WTC11 (cell line): ENCODE measurements at regions of chrX and their contacts with region 1.

Region 1: DNA sequence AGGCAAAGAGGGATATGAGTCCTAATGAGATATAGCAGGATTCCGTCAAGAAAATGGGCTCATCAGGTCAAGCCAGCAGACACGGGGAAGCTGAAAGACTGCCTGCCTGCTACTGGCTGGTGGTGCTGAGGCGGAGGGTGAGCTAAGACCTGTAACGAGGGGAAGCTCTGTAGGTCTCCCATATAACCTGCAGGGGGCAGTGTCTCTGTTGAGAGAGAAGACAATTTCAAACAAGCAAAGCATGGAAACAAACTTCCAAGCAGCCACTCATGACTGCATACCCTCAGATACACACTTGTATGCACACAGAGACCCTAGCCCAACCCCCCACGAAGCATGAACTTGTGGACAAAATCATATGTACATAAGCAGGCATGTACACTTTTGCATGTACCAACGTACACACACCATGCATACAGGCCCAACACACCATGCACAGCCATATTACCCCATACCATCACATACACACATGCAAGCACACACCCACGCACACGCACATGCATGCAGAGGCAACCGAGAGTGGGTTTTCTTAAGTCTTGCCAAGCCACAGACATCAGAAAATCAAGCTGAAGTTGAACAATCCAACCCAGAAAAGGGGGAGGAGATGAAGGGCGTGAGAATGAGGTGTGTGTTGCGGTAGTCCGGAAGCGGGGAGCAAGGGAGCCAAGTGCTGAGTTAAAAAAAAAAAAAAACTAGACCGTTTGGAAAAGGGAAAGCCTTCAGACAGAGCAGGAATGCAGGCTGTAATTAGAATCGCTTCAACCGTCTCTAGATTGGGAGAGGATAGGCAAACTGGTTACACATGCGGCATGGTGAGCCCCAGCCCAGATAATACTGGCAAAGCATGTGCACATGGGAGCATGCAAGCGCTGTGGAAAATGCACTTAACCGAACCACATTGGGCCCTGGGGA is 71.0 kb downstream of the PJA1 start:
- DNase-seq: peak; percentile 55
- ATAC-seq: peak; percentile 92
- H3K4me3 Mint-ChIP-seq: no peak overlapping the region
- H3K27ac Mint-ChIP-seq: no peak overlapping the region
- H3K4me1 Mint-ChIP-seq: no peaks in the 10 kb centered on the region
- H3K27me3 Mint-ChIP-seq: no peaks in the 10 kb centered on the region
- CTCF ChIP-seq: peak; percentile 65

Region 2: DNA sequence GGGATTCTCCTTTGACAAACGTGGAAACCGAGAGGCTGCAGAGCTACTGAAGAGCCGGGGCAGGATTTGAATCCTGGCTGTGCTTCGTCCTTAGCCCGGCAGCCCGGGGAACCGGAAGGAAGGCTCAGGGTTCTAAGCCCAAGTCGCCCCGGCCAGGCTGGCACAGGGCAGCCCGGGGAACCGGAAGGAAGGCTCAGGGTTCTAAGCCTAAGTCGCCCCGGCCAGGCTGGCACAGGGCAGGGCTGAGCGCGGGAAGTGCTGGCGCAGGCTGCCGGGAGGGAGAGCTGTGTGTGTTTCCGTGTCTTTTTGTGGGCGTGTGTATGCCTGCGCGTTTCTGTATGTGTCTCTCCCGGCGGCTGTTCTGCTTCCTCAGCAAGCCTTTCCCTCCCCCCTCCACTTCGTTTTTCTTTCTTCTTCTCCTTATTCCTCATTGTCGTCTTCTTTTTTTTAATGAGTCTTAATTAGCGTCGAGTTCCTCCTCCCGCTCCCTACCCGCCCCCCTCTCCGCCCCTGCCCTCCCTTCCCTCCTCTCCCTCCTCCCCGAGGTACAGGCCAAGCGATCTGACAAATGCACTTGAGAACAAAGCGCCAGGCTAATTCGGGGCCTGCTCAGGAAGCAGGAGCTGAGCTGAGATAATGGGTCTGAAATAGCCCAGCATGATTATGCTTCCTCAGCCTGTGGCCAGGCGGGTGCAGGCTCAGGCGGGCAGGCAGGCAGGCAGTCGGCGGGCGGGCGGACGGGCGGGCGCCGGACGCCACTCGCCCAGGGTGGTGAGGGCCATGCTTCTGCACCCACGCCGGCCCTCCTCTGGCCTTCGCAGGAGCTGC is 199.5 kb before region 1 on chrX:
- CTCF ChIA-PET with region 1: no interaction called
- POLR2A ChIA-PET with region 1: no interaction called
- DNase-seq: no peak
- ATAC-seq: peak; percentile 57
- H3K4me3 Mint-ChIP-seq: peak overlapping the region; percentile 42
- H3K27ac Mint-ChIP-seq: no peak overlapping the region
- H3K4me1 Mint-ChIP-seq: peaks cover 29% of the 10 kb centered on the region
- H3K27me3 Mint-ChIP-seq: peaks cover 37% of the 10 kb centered on the region
- CTCF ChIP-seq: no peak

Region 3: DNA sequence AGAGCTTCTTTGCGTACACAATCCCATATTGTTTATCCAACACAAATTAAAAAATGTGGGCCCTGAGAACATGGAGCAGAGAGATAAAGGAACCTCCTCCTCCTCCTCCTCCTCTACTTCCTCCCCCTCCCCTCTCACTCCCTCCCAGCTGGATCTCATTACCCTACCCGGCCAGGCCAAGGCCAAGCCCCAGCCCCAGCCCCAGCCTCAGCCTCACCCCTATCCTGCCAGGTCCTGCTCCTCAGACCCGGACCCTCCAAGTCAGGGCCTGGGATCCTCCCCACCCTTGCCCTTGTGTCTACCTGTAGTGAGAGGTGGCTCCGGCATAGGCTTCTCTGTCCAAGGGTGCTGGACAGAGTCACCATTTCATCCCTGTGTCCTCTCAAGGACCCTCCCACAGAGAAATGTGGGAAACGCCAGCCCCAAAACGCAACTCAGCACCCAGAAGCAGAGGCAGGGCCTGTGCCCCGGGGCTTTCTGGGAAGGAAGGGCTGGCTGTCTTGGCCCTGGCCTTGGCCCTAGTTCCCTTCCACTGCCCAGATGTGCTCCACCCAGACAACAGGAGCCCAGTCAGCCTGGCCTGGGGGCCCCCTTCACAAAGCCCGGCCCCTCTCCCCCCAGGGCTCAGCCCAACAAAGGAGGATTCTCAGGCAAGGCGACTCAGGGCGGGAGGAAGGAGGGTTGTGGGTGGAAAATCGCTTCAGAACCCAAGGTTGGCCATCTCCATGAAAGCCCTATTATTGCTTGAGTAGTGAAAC is 11.6 kb before region 1 on chrX:
- CTCF ChIA-PET with region 1: interaction called, 10 read pairs
- POLR2A ChIA-PET with region 1: no interaction called
- DNase-seq: no peak
- ATAC-seq: no peak
- H3K4me3 Mint-ChIP-seq: no peak overlapping the region
- H3K27ac Mint-ChIP-seq: no peak overlapping the region
- H3K4me1 Mint-ChIP-seq: peaks cover 17% of the 10 kb centered on the region
- H3K27me3 Mint-ChIP-seq: 0 out of 2 replicates have a peak, but pooled peaks cover 2% of the 10 kb centered on the region
- CTCF ChIP-seq: no peak

Region 4: GRCh38 chrX:69109683-69110082 is 15.5 kb after region 1 on chrX:
- CTCF ChIA-PET with region 1: interaction called, 32 read pairs
- POLR2A ChIA-PET with region 1: interaction called, 3 read pairs
- DNase-seq: no peak
- ATAC-seq: no peak
- H3K4me3 Mint-ChIP-seq: no peak overlapping the region
- H3K27ac Mint-ChIP-seq: no peak overlapping the region
- H3K4me1 Mint-ChIP-seq: peaks cover 25% of the 10 kb centered on the region
- H3K27me3 Mint-ChIP-seq: no peaks in the 10 kb centered on the region
- CTCF ChIP-seq: no peak

Region 5: DNA sequence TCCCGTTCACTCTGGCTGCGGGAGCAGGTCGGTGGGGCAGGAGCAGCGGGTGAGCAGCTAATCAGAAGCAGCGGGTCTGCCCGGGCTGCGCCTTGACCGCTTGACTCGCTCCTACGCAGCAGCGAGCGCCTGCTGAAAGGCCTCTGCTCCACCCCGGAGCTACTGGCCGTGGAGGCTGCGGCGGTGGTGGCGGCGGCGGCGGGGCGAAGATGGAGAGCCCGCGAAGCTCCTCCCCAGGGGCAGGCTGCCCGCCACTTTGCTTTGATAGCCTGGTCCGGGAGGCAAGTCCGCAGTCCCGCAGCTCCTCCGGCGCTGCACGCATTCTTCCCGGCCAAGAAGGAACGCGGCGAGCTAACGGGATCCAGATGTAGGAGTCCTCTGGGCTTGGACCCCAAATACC is 34.4 kb after region 1 on chrX:
- CTCF ChIA-PET with region 1: interaction called, 15 read pairs
- POLR2A ChIA-PET with region 1: interaction called, 3 read pairs
- DNase-seq: peak; percentile 51
- ATAC-seq: peak; percentile 80
- H3K4me3 Mint-ChIP-seq: peak overlapping the region; percentile 45; the same call in 1 of the 2 replicates
- H3K27ac Mint-ChIP-seq: no peak overlapping the region
- H3K4me1 Mint-ChIP-seq: peaks cover 30% of the 10 kb centered on the region
- H3K27me3 Mint-ChIP-seq: peaks cover 42% of the 10 kb centered on the region
- CTCF ChIP-seq: no peak

Region 6: DNA sequence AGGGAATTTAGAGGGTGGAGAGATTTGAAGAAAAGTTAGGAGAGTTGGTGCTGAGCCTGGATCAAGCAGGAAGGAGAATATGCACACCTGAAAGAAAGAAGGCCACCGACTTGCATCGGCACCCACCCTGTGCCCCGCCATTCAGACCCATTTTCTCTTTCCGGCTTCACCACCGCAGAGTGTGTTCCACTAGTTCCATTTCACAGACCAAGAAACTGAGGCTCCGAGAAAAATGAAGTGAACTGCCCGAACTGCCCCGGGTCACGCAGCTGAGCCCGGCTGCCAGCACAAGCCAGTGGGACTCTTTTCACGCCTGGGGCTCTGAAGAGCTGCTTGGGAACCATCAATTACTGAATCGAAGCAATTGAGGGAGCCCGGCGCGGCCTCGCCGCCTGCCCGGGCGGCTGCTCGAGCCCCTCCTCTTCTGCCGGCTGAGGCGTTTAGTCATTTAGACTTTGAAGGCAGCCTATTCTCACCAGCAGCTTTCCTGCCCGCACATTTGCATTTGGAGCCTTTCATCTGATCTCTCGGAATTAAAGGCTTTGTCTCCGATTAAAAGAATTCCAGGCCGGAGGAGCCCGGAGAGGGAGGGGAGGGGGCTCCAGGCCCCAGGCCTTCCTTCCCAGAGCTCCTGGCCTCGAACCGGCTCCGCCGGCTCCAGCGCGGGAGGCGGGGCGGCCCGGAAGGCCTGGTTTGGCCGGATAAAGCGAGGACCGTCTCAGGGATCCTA is 211.3 kb after region 1 on chrX:
- CTCF ChIA-PET with region 1: no interaction called
- POLR2A ChIA-PET with region 1: no interaction called
- DNase-seq: peak; percentile 55
- ATAC-seq: peak; percentile 67
- H3K4me3 Mint-ChIP-seq: peak overlapping the region; percentile 47
- H3K27ac Mint-ChIP-seq: no peak overlapping the region
- H3K4me1 Mint-ChIP-seq: peaks cover 32% of the 10 kb centered on the region
- H3K27me3 Mint-ChIP-seq: peaks cover 14% of the 10 kb centered on the region
- CTCF ChIP-seq: no peak

Region 7: DNA sequence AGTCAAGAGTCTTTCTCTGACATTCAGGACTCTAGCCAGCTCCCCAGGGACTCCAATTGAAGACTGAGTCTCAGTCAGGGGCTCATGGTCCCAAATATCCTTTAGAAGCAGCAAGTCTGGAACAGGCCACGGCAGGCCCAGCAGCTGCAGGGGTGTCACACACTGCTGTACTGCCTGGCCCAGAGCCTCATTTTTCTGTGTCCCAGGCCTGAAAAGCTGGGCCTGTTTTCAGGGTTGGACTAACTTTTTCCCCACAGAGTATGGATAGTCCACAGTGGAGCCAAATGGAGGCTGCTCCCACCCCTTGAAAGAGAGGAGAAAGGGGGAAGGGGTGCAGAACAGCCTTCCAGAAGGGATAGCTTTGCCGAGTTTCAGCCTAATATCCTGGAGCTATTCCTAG is 263.1 kb after region 1 on chrX:
- CTCF ChIA-PET with region 1: no interaction called
- POLR2A ChIA-PET with region 1: no interaction called
- DNase-seq: no peak
- ATAC-seq: no peak
- H3K4me3 Mint-ChIP-seq: no peak overlapping the region
- H3K27ac Mint-ChIP-seq: no peak overlapping the region
- H3K4me1 Mint-ChIP-seq: no peaks in the 10 kb centered on the region
- H3K27me3 Mint-ChIP-seq: peaks cover 14% of the 10 kb centered on the region
- CTCF ChIP-seq: no peak